CD8-positive, alpha-beta T cell (primary cell): ENCODE measurements at regions of chr13 and their contacts with region 1.

Region 1: GRCh38 chr13:51070005-51070649 is 40.9 kb downstream of the C13orf42 start:
- DNase-seq: peak; percentile 42 to 84 (median 76)
- ATAC-seq: peak; percentile 90
- H3K4me3 ChIP-seq: no peak overlapping the region
- H3K4me3 Mint-ChIP-seq: no peak overlapping the region
- H3K27ac ChIP-seq: no peak overlapping the region
- H3K27ac Mint-ChIP-seq: no peak overlapping the region
- H3K4me1 ChIP-seq: peaks cover 6% of the 10 kb centered on the region
- H3K4me1 Mint-ChIP-seq: peaks cover 7% of the 10 kb centered on the region
- H3K27me3 ChIP-seq: no peaks in the 10 kb centered on the region
- H3K27me3 Mint-ChIP-seq: peaks cover 20% of the 10 kb centered on the region
- CTCF ChIP-seq: peak; percentile 94

Region 2: DNA sequence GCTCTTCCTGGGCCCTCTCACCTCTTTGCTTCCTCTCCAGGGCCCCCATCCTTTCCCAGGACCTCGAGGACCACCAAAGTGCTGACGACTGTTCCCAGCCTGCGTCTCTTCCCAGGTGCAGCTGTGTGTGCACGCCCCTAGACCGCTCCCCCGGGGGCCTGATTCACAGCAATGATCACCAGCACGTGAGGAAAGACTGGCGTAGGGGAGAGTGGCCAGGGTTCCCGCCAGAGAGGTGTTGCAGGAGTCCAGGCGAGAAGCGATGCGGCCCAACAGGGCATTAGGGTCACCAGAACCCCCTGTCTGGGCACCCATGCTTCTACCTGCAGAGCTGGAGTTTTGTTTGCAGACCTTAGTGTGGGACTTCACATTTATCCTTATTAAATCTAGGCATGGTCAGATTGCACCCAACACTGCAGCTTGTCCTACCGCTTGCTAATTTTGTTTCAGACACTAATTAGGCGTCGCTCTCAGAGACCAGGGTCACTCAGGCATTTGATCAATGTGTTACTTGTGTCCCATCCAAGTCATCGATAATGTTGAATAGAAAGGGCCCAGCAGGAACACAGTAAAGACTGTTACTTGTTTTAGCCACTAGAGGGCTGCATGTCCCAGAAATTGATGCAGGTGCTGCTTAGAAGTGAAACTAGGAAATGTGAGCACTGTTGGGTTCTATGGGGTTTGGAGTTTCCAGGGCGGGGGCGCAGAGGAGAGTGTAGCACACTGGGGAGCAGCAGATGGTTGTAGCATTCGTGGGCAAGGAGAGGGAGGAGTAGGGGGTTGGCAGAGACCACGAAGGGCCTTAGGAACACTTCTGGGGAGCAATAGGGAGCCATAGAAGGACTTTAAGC is 1769.2 kb before region 1 on chr13:
- CTCF ChIA-PET with region 1: no interaction called
- POLR2A ChIA-PET with region 1: no interaction called
- intact Hi-C with region 1: loop called in 1 of 2 experiments (anchors 5 kb)
- DNase-seq: peak; percentile 25 to 87 (median 59)
- ATAC-seq: peak; percentile 99
- H3K4me3 ChIP-seq: peak overlapping the region; percentile 45 to 52
- H3K4me3 Mint-ChIP-seq: peak overlapping the region; percentile 84
- H3K27ac ChIP-seq: peak overlapping the region in 1 of 2 experiments; percentile 17
- H3K27ac Mint-ChIP-seq: peak overlapping the region; percentile 77
- H3K4me1 ChIP-seq: no peaks in the 10 kb centered on the region
- H3K4me1 Mint-ChIP-seq: peaks cover 4% of the 10 kb centered on the region
- H3K27me3 ChIP-seq: no peaks in the 10 kb centered on the region
- H3K27me3 Mint-ChIP-seq: no peaks in the 10 kb centered on the region
- CTCF ChIP-seq: peak; percentile 83

Region 3: GRCh38 chr13:49669735-49670309 is 1400.3 kb before region 1 on chr13:
- CTCF ChIA-PET with region 1: no interaction called
- POLR2A ChIA-PET with region 1: no interaction called
- intact Hi-C with region 1: loop called (anchors 2 kb)
- DNase-seq: peak in 5 of 9 experiments; percentile 15 to 50 (median 28)
- ATAC-seq: peak; percentile 52
- H3K4me3 ChIP-seq: no peak overlapping the region
- H3K4me3 Mint-ChIP-seq: no peak overlapping the region
- H3K27ac ChIP-seq: no peak overlapping the region
- H3K27ac Mint-ChIP-seq: no peak overlapping the region
- H3K4me1 ChIP-seq: no peaks in the 10 kb centered on the region
- H3K4me1 Mint-ChIP-seq: no peaks in the 10 kb centered on the region
- H3K27me3 ChIP-seq: no peaks in the 10 kb centered on the region
- H3K27me3 Mint-ChIP-seq: no peaks in the 10 kb centered on the region
- CTCF ChIP-seq: peak; percentile 46

Region 4: DNA sequence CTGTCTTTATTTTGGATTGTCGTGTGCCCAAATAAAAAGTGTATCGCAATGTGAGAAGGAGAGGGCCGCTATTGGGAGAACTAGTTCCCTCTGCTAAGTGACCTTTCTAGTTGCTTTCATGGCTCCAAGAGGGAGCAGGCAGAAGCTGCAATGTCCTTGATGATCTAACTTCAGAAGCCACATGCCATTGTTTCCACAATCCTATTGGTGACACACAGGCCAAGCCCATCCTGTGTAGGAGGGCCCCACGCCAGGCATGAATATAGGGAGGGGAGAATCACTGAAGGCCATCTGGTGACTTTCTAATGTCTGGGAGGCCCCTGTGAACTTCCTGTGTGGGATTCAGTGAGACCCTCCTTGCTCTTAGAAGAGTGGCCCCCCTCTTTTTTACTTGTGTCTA is 1229.9 kb before region 1 on chr13:
- CTCF ChIA-PET with region 1: no interaction called
- POLR2A ChIA-PET with region 1: no interaction called
- intact Hi-C with region 1: loop called in 1 of 2 experiments (anchors 5 kb)
- DNase-seq: no peak
- ATAC-seq: no peak
- H3K4me3 ChIP-seq: no peak overlapping the region
- H3K4me3 Mint-ChIP-seq: no peak overlapping the region
- H3K27ac ChIP-seq: no peak overlapping the region
- H3K27ac Mint-ChIP-seq: no peak overlapping the region
- H3K4me1 ChIP-seq: no peaks in the 10 kb centered on the region
- H3K4me1 Mint-ChIP-seq: no peaks in the 10 kb centered on the region
- H3K27me3 ChIP-seq: no peaks in the 10 kb centered on the region
- H3K27me3 Mint-ChIP-seq: no peaks in the 10 kb centered on the region
- CTCF ChIP-seq: no peak

Region 5: GRCh38 chr13:50531917-50532899 is 537.9 kb before region 1 on chr13:
- CTCF ChIA-PET with region 1: no interaction called
- POLR2A ChIA-PET with region 1: no interaction called
- intact Hi-C with region 1: loop called in 1 of 2 experiments (anchors 5 kb)
- DNase-seq: peak in 2 of 9 experiments; percentile 28 to 37
- ATAC-seq: no peak
- H3K4me3 ChIP-seq: no peak overlapping the region
- H3K4me3 Mint-ChIP-seq: no peak overlapping the region
- H3K27ac ChIP-seq: no peak overlapping the region
- H3K27ac Mint-ChIP-seq: no peak overlapping the region
- H3K4me1 ChIP-seq: no peaks in the 10 kb centered on the region
- H3K4me1 Mint-ChIP-seq: peaks cover 12% of the 10 kb centered on the region
- H3K27me3 ChIP-seq: no peaks in the 10 kb centered on the region
- H3K27me3 Mint-ChIP-seq: no peaks in the 10 kb centered on the region
- CTCF ChIP-seq: peak; percentile 29

Region 6: DNA sequence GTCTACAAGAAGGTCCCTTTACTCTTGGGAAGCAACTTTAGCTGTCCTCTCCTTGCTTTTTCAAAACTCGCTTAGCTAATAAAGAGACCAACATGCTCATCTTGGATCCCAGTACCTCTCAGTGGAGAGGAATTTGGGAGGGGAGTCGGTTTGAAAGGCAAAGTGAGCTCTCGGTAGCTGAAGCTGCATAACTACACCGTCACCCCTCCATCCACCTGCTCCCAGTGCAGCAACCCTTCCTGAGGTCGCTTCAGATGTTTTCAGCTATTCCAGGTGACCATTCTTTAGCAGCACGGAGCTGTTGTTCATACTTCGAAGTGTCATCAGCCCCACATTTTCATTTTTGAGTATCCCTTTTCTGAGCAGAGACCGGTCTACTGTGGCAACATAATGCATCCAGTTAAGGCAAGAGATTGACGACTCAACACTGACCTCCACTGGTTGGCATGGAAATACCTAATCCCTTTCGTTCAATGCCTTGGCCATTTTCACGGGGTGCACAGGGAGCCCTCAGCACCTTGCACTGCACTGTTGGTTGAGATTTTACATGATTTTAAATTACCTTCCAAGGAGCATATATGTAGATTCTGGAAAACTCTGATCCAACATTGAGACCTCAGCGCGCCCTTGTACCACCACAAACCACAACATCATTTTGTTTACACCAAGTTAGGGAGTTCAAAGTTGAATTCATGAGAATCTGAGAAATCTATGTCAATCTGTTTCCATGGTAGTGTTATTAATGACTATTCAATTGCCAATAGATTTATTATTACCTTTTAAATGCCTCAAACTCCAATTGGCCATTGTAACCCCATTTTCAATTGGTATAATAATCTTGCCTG is 268.8 kb before region 1 on chr13:
- CTCF ChIA-PET with region 1: interaction called, 4 read pairs
- POLR2A ChIA-PET with region 1: no interaction called
- intact Hi-C with region 1: loop called (anchors 1 to 10 kb)
- DNase-seq: peak; percentile 25 to 82 (median 57)
- ATAC-seq: peak; percentile 96
- H3K4me3 ChIP-seq: no peak overlapping the region
- H3K4me3 Mint-ChIP-seq: no peak overlapping the region
- H3K27ac ChIP-seq: no peak overlapping the region
- H3K27ac Mint-ChIP-seq: no peak overlapping the region
- H3K4me1 ChIP-seq: no peaks in the 10 kb centered on the region
- H3K4me1 Mint-ChIP-seq: peaks cover 5% of the 10 kb centered on the region
- H3K27me3 ChIP-seq: no peaks in the 10 kb centered on the region
- H3K27me3 Mint-ChIP-seq: no peaks in the 10 kb centered on the region
- CTCF ChIP-seq: peak; percentile 70

Region 7: GRCh38 chr13:51058461-51059167 is 11.5 kb before region 1 on chr13:
- CTCF ChIA-PET with region 1: interaction called, 11 read pairs
- POLR2A ChIA-PET with region 1: no interaction called
- intact Hi-C with region 1: no loop called
- DNase-seq: no peak
- ATAC-seq: no peak
- H3K4me3 ChIP-seq: no peak overlapping the region
- H3K4me3 Mint-ChIP-seq: no peak overlapping the region
- H3K27ac ChIP-seq: no peak overlapping the region
- H3K27ac Mint-ChIP-seq: no peak overlapping the region
- H3K4me1 ChIP-seq: no peaks in the 10 kb centered on the region
- H3K4me1 Mint-ChIP-seq: no peaks in the 10 kb centered on the region
- H3K27me3 ChIP-seq: no peaks in the 10 kb centered on the region
- H3K27me3 Mint-ChIP-seq: peaks cover under 1% of the 10 kb centered on the region
- CTCF ChIP-seq: no peak